Astrocyte of the cerebellum (primary cell): ENCODE measurements at regions of chr10 and their contacts with region 1.

Region 1: GRCh38 chr10:82660205-82660604 is 785.2 kb downstream of the NRG3 start:
- DNase-seq: no peak
- H3K4me3 ChIP-seq: no peak overlapping the region
- CTCF ChIP-seq: no peak

Region 2: DNA sequence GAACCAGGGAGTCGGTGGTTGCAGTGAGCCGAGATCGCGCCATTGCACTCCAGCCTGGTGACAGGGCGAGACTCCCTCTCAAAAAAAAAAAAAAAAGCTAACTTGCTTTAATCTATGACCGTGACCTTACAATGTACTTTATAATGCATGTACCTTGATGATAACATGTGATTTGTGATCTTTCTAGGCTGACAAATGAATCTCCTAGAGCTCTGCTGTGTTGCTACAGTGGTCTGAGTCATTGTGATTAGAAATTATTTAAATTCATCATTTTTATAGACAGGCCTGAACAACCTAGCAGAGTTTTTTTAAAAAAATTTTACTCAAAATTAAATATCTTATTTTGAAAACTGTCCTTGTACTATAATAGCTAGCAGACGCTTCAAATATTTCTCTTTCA is 62.4 kb before region 1 on chr10:
- in situ Hi-C with region 1: loop called (anchors 5 kb)
- DNase-seq: no peak
- H3K4me3 ChIP-seq: no peak overlapping the region
- CTCF ChIP-seq: no peak